Activated B cell treated with CpG ODN at 0.5 μM for 24 hours (primary cell): ENCODE measurements at regions of chr13 and their contacts with region 1.

Region 1: GRCh38 chr13:36420437-36420891 is 11.8 kb upstream of the CCNA1 start:
- DNase-seq: peak; percentile 34
- ATAC-seq: peak; percentile 86
- H3K4me3 Mint-ChIP-seq: no peak overlapping the region
- H3K27ac Mint-ChIP-seq: no peak overlapping the region
- H3K4me1 Mint-ChIP-seq: peaks cover 8% of the 10 kb centered on the region
- H3K27me3 Mint-ChIP-seq: peaks cover 13% of the 10 kb centered on the region
- CTCF ChIP-seq: peak; percentile 92

Region 2: DNA sequence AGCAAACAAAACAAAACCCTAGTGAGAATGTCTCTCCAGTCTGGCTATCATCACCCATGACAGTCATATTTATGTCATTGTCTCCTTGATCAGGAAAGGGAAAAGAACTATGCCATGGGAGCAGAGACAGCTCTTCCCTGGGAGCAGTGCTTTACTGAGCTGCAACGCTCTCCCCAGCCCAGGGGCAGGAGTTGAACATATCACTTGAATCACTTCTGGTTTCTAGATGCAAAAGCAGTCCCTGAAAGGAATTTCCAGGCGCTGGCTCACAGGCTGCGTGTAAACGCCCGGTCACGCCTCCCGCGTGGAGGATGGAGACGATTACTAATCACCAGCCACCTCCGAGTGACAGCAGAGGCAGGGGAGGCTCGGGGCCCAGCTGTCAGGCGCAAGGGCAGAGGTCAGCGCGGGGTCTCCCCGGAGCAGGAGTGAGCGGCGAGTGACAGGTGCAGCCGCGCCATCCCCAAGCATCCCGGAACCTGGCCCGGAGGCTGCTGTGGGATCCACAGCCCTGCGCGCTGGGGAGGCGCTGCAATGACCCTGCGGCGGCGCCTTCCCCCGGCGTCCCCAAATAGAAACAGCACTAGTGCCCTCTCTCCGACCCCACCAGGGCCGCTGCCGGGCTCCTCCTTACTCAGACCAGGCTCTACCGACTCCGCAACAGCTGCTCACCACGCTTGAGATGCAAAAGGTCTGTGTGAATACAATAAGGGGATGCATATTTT is 265.7 kb before region 1 on chr13:
- CTCF ChIA-PET with region 1: no interaction called
- POLR2A ChIA-PET with region 1: no interaction called
- intact Hi-C with region 1: no loop called
- DNase-seq: no peak
- ATAC-seq: no peak
- H3K4me3 Mint-ChIP-seq: no peak overlapping the region
- H3K27ac Mint-ChIP-seq: no peak overlapping the region
- H3K4me1 Mint-ChIP-seq: no peaks in the 10 kb centered on the region
- H3K27me3 Mint-ChIP-seq: peaks cover 5% of the 10 kb centered on the region
- CTCF ChIP-seq: no peak

Region 3: GRCh38 chr13:36382030-36382429 is 38.4 kb before region 1 on chr13:
- CTCF ChIA-PET with region 1: no interaction called
- POLR2A ChIA-PET with region 1: no interaction called
- intact Hi-C with region 1: no loop called
- DNase-seq: no peak
- ATAC-seq: no peak
- H3K4me3 Mint-ChIP-seq: no peak overlapping the region
- H3K27ac Mint-ChIP-seq: no peak overlapping the region
- H3K4me1 Mint-ChIP-seq: no peaks in the 10 kb centered on the region
- H3K27me3 Mint-ChIP-seq: peaks cover 8% of the 10 kb centered on the region
- CTCF ChIP-seq: no peak

Region 4: GRCh38 chr13:36700170-36700569 is 279.7 kb after region 1 on chr13:
- CTCF ChIA-PET with region 1: no interaction called
- POLR2A ChIA-PET with region 1: no interaction called
- intact Hi-C with region 1: no loop called
- DNase-seq: no peak
- ATAC-seq: no peak
- H3K4me3 Mint-ChIP-seq: no peak overlapping the region
- H3K27ac Mint-ChIP-seq: no peak overlapping the region
- H3K4me1 Mint-ChIP-seq: no peaks in the 10 kb centered on the region
- H3K27me3 Mint-ChIP-seq: peaks cover 8% of the 10 kb centered on the region
- CTCF ChIP-seq: no peak

Region 5: DNA sequence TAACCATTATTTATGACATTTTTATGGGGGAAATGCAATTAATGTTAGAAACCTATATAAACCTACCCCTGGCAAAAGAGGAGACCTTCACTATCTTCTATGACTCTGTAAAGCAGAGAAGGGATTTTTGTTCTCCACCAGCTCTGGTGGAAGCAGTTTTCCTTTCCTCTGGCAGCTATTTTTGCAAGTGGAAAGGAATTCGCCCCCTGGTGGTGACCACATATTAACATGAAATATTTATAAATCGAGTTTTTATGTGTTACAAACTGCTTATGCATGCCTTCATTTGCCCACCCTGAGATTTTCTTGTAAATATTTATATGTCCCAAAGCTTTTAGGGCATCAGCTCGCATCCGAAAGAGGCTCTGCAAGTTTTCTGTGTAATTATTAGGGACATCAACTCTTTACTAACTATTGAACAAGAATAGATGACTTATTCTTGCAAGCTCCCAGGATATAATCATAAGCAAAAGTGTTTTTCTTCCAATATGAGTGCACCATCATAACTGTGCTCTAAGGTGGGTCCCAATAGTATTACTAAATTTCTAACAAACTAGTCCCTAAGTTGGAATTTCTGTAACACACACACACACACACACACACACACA is 315.8 kb after region 1 on chr13:
- CTCF ChIA-PET with region 1: interaction called, 14 read pairs
- POLR2A ChIA-PET with region 1: no interaction called
- intact Hi-C with region 1: loop called (anchors 1 kb)
- DNase-seq: no peak
- ATAC-seq: no peak
- H3K4me3 Mint-ChIP-seq: no peak overlapping the region
- H3K27ac Mint-ChIP-seq: no peak overlapping the region
- H3K4me1 Mint-ChIP-seq: no peaks in the 10 kb centered on the region
- H3K27me3 Mint-ChIP-seq: no peaks in the 10 kb centered on the region
- CTCF ChIP-seq: peak; percentile 71

Region 6: GRCh38 chr13:36818804-36819738 is 398.6 kb after region 1 on chr13 and contains the start of gene RFXAP:
- CTCF ChIA-PET with region 1: no interaction called
- POLR2A ChIA-PET with region 1: no interaction called
- intact Hi-C with region 1: loop called (anchors 2 kb)
- DNase-seq: peak; percentile 93
- ATAC-seq: peak; percentile 94
- H3K4me3 Mint-ChIP-seq: peak within 1 kb of the TSS; percentile 93
- H3K27ac Mint-ChIP-seq: peak within 1 kb of the TSS; percentile 90
- H3K4me1 Mint-ChIP-seq: peaks cover 44% of the 10 kb centered on the region
- H3K27me3 Mint-ChIP-seq: peaks cover 6% of the 10 kb centered on the region
- CTCF ChIP-seq: no peak
- total RNA-seq, gene RFXAP: 8.8 and 9.6 TPM in 2 replicates

Region 7: DNA sequence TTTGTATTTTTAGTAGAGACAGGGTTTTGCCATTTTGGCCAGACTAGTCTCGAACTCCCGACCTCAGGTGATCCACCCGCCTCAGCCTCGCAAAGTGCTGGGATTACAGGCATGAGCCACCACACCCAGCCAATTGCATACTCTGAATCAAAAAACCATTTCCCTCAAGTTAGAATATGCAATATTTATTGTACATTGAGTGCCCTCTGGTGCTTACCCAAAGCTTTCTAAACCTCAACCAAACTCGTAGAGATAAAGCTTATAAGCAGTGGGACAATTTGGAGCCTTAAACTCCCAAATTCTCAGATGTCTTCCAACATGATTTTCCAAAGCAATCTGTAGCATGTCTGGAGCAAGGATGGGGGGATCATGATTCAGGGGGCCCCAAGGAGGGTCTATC is 420.9 kb after region 1 on chr13:
- CTCF ChIA-PET with region 1: interaction called, 5 read pairs
- POLR2A ChIA-PET with region 1: no interaction called
- intact Hi-C with region 1: loop called (anchors 1 kb)
- DNase-seq: no peak
- ATAC-seq: no peak
- H3K4me3 Mint-ChIP-seq: no peak overlapping the region
- H3K27ac Mint-ChIP-seq: no peak overlapping the region
- H3K4me1 Mint-ChIP-seq: no peaks in the 10 kb centered on the region
- H3K27me3 Mint-ChIP-seq: no peaks in the 10 kb centered on the region
- CTCF ChIP-seq: no peak

Region 8: DNA sequence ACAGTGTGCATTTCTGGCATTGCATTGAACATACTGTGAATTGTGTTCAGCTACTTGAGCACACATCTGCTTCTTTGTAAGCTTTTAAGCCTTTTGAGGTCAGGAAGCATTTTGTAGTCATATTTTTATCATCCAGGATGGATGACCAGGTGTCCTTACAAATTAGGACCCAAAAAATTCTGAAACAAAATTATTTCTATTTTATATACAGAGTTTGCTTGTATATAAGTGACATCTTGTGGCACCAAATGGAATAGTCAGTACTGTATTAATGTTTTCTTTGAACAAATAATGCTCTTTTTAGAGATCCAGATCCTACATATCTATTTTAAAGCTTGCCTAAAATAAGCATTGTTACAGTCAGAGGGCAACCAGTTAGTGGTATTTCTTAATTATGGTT is 648.5 kb after region 1 on chr13:
- CTCF ChIA-PET with region 1: no interaction called
- POLR2A ChIA-PET with region 1: no interaction called
- intact Hi-C with region 1: loop called (anchors 2 kb)
- DNase-seq: no peak
- ATAC-seq: no peak
- H3K4me3 Mint-ChIP-seq: no peak overlapping the region
- H3K27ac Mint-ChIP-seq: no peak overlapping the region
- H3K4me1 Mint-ChIP-seq: peaks cover 3% of the 10 kb centered on the region
- H3K27me3 Mint-ChIP-seq: peaks cover 4% of the 10 kb centered on the region
- CTCF ChIP-seq: no peak